PC-9 (cell line): ENCODE measurements at regions of chr9 and their contacts with region 1.

Region 1: DNA sequence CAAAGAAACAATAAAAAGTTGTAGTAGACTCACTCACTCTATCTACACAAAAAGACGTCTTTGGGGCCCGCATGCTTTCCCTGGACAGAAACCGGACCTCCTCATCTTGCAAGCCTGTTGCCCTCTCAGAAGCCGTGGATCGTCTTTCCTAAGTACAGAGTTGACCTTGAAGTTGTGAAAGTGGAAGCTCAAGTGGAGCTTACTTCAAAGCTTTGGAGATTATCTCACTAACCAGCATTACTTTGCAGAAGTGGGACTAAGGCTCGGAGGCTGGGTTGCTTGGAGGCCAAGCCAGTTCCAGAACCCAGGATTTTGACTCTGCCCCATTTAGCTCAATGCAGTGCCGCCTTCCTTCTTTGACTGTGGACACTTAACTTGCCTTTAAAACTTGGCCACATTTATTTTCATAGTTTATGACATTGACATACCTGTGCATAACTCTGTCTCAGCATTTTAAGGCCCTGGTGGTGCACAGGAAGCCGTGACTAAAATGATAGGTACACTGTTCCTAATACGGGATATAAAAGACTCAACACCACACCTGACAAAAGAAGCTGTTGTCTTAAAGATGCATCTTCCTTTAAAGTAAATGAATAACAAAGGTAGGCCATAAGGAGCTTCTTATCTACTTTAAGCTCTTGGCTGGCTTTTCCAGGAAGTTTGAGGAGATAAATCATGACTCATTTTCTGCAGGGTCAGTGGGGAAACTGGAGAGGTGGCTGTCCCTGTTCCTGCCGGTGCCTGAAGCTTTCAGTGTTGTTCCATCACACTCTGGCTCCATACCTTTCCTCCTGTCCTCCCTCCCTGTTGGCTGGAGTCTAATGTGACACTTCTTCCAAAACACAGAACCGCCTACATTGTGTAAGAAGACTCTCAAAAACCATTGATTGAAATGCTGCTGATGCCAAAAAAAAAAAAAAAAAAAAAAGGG is 10.7 kb downstream of the SLC25A25 start:
- DNase-seq: peak; percentile 79 to 94
- H3K4me3 ChIP-seq: no peak overlapping the region
- H3K27ac ChIP-seq: peak overlapping the region; percentile 74
- H3K4me1 ChIP-seq: peaks cover 42% of the 10 kb centered on the region
- H3K27me3 ChIP-seq: no peaks in the 10 kb centered on the region
- CTCF ChIP-seq: no peak

Region 2: GRCh38 chr9:127930231-127931091 is 148.3 kb before region 1 on chr9 and contains the start of gene PIP5KL1:
- CTCF ChIA-PET with region 1: no interaction called
- POLR2A ChIA-PET with region 1: interaction called, 13 read pairs
- intact Hi-C with region 1: no loop called
- DNase-seq: peak; percentile 68 to 91
- H3K4me3 ChIP-seq: peak within 1 kb of the TSS; percentile 58
- H3K27ac ChIP-seq: no peak within 1 kb of the TSS
- H3K4me1 ChIP-seq: peaks cover 37% of the 10 kb centered on the region
- H3K27me3 ChIP-seq: no peaks in the 10 kb centered on the region
- CTCF ChIP-seq: no peak
- total RNA-seq, gene PIP5KL1: 21.9 and 22.5 TPM in 2 replicates

Region 3: DNA sequence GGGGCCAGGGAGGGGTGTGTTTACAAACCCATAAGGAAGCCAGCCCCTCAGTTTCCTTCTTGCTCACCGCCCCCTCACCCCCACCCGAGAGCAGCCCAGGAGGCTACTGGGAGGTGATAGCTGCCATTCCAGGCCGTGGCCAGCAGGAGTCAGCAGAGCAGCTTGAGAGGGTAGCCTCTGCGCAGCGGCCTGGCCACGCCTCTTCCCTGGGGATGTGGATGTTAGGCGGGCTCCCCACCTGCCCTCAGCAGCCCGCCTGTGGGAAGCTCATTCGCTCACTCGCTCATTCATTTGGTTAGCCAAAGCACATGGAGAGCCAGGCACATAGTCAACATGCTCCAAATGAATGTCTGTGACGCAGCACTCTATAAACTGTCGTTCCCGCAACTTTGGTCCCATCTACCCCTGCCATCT is 135.0 kb before region 1 on chr9:
- CTCF ChIA-PET with region 1: no interaction called
- POLR2A ChIA-PET with region 1: no interaction called
- intact Hi-C with region 1: loop called (anchors 2 kb)
- DNase-seq: peak; percentile 61 to 80
- H3K4me3 ChIP-seq: no peak overlapping the region
- H3K27ac ChIP-seq: no peak overlapping the region
- H3K4me1 ChIP-seq: no peaks in the 10 kb centered on the region
- H3K27me3 ChIP-seq: no peaks in the 10 kb centered on the region
- CTCF ChIP-seq: peak; percentile 88

Region 4: GRCh38 chr9:128175102-128175563 is 96.4 kb after region 1 on chr9:
- CTCF ChIA-PET with region 1: no interaction called
- POLR2A ChIA-PET with region 1: no interaction called
- intact Hi-C with region 1: no loop called
- DNase-seq: no peak
- H3K4me3 ChIP-seq: no peak overlapping the region
- H3K27ac ChIP-seq: no peak overlapping the region
- H3K4me1 ChIP-seq: peaks cover 18% of the 10 kb centered on the region
- H3K27me3 ChIP-seq: no peaks in the 10 kb centered on the region
- CTCF ChIP-seq: no peak

Region 5: GRCh38 chr9:128412120-128412790 is 333.5 kb after region 1 on chr9:
- CTCF ChIA-PET with region 1: no interaction called
- POLR2A ChIA-PET with region 1: interaction called, 25 read pairs
- intact Hi-C with region 1: no loop called
- DNase-seq: peak in 1 of 2 experiments; percentile 65
- H3K4me3 ChIP-seq: no peak overlapping the region
- H3K27ac ChIP-seq: no peak overlapping the region
- H3K4me1 ChIP-seq: peaks cover 15% of the 10 kb centered on the region
- H3K27me3 ChIP-seq: no peaks in the 10 kb centered on the region
- CTCF ChIP-seq: peak; percentile 71

Region 6: GRCh38 chr9:128617943-128618342 is 539.2 kb after region 1 on chr9:
- CTCF ChIA-PET with region 1: no interaction called
- POLR2A ChIA-PET with region 1: no interaction called
- intact Hi-C with region 1: no loop called
- DNase-seq: no peak
- H3K4me3 ChIP-seq: no peak overlapping the region
- H3K27ac ChIP-seq: no peak overlapping the region
- H3K4me1 ChIP-seq: no peaks in the 10 kb centered on the region
- H3K27me3 ChIP-seq: no peaks in the 10 kb centered on the region
- CTCF ChIP-seq: no peak